ENCODE measurements at regions of chr19 and their contacts with region 1.

Region 1: GRCh38 chr19:57627417-57627816 is 5.6 kb upstream of the ZNF211 start:
- DNase-seq: no peak
- H3K4me3 ChIP-seq: no peak overlapping the region
- H3K27ac ChIP-seq: no peak overlapping the region
- H3K27me3 ChIP-seq: no peaks in the 10 kb centered on the region
- CTCF ChIP-seq: no peak

Region 2: GRCh38 chr19:56778351-56778750 is 849.1 kb before region 1 on chr19:
- intact Hi-C with region 1: loop called in 1 of 2 experiments (anchors 5 kb)
- DNase-seq: no peak
- H3K4me3 ChIP-seq: no peak overlapping the region
- H3K27ac ChIP-seq: no peak overlapping the region
- H3K27me3 ChIP-seq: no peaks in the 10 kb centered on the region
- CTCF ChIP-seq: no peak

Region 3: DNA sequence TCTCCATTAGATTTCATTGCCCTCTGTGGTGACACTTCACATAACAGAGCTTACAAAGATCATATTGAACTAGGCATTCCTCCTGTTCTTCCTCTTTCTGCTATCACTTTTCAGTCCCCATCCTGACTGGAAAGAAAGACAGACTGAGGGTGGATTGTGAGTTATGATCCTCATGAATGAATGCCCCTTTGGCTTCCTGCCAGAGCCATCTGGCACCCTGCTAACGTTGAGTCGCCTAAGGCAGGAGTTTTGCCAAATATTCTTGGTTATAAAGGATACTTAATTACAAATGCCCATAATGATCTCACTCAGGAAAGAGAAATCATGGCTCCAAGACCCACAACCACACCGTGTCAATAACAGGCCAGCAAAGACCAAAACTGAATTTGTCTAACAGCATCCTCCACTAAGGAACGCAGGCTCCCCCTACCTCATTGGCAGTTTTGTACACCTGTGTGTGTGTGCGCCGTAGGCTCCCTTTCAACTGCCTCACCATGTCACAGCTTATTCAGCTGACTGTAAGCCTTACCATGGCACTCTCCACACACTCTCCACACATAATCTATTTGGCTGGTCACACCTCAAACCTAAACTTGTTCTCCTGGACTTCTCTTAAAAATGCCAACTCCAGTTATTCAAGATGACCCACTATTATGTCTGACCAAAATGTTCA is 21.1 kb after region 1 on chr19:
- intact Hi-C with region 1: no loop called
- DNase-seq: peak in 1 of 10 donors; percentile 10
- H3K4me3 ChIP-seq: no peak overlapping the region
- H3K27ac ChIP-seq: no peak overlapping the region
- H3K27me3 ChIP-seq: no peaks in the 10 kb centered on the region
- CTCF ChIP-seq: no peak

Measured in dorsolateral prefrontal cortex (tissue), 120 donors.